Endothelial cell of umbilical vein (primary cell): ENCODE measurements at regions of chr22 and their contacts with region 1.

Region 1: DNA sequence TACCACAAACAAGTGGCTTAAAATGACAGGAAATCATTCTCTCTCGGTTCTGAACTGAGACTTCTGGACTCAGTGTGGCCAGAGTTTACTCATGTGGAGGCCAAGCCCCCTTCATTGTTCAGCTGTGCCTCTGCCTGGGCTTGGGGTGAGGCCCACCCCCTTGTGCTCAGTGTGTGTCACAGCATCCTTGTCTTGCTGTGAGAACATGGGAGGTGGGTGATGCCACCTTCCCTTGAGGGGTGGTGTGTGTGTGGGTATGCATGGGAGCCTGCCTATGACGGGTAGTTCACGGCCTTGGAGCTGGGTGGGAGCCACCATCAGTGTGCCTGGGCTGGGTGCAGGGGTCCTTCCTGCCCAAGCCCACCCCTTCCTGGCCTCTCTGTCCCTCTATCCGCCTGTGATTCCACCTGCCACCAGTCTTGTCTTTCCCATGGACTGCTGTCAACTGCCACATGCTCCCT is 101.7 kb downstream of the MORC2 start:
- DNase-seq: peak; percentile 80
- H3K4me3 ChIP-seq: no peak overlapping the region
- H3K27ac ChIP-seq: peak overlapping the region; percentile 19
- H3K4me1 ChIP-seq: peaks cover 14% of the 10 kb centered on the region
- H3K27me3 ChIP-seq: no peaks in the 10 kb centered on the region
- CTCF ChIP-seq: peak; percentile 37 to 44
- POLR2A ChIP-seq: no peak

Region 2: DNA sequence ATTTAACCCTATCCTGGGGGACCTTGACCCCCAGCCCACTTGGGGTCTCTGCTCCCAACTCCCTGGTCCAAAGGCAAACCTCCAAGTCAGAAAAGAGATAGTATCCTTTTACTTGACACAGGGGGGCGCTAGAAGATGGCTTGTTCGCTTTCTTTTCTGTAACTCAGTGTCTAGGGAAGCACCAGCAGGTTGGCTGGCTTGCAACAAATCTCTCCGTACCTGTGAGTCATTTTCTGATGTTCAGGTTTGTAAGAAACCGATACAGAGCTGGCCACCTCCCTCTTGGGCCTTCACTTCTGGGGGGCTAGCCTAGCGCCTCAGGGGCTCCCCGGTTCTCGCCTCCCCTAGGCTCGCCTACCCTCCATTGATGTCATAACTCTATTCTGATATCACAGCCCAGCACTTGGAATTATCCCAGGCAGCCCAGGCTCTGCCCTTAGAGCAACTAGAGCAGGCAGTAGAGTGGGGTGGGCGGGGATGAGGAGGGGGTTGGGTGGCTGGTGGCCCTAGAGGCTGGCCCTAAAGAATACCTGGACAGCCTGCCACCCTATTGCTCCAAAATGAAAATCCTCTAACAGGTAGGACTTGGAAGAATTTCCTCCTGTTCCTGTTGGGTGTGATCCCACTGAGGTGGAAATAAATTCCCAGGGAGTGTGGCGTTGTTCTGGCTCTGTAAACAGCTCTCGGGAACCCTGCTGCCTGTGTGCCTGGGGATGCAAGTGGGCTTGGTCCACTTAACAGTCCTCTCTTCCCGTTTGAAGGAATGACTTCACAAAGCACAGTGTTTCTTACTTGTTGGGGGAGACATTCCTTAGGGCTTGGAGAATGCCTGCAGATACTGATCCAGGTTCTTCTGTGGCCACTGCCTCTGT is 102.8 kb before region 1 on chr22:
- CTCF ChIA-PET with region 1: interaction called, 13 read pairs
- POLR2A ChIA-PET with region 1: no interaction called
- dilution Hi-C with region 1: no loop called
- intact Hi-C with region 1: loop called (anchors 1 kb)
- DNase-seq: peak; percentile 77
- H3K4me3 ChIP-seq: no peak overlapping the region
- H3K27ac ChIP-seq: no peak overlapping the region
- H3K4me1 ChIP-seq: no peaks in the 10 kb centered on the region
- H3K27me3 ChIP-seq: no peaks in the 10 kb centered on the region
- CTCF ChIP-seq: peak; percentile 67 to 71
- POLR2A ChIP-seq: no peak

Region 3: GRCh38 chr22:30830907-30831306 is 35.9 kb before region 1 on chr22:
- CTCF ChIA-PET with region 1: no interaction called
- POLR2A ChIA-PET with region 1: no interaction called
- dilution Hi-C with region 1: no loop called
- intact Hi-C with region 1: loop called (anchors 1 kb)
- DNase-seq: peak; percentile 92
- H3K4me3 ChIP-seq: no peak overlapping the region
- H3K27ac ChIP-seq: peak overlapping the region; percentile 69
- H3K4me1 ChIP-seq: peaks cover 18% of the 10 kb centered on the region
- H3K27me3 ChIP-seq: no peaks in the 10 kb centered on the region
- CTCF ChIP-seq: no peak
- POLR2A ChIP-seq: no peak